H1 (cell line): ENCODE measurements at regions of chr2 and their contacts with region 1.

Region 1: DNA sequence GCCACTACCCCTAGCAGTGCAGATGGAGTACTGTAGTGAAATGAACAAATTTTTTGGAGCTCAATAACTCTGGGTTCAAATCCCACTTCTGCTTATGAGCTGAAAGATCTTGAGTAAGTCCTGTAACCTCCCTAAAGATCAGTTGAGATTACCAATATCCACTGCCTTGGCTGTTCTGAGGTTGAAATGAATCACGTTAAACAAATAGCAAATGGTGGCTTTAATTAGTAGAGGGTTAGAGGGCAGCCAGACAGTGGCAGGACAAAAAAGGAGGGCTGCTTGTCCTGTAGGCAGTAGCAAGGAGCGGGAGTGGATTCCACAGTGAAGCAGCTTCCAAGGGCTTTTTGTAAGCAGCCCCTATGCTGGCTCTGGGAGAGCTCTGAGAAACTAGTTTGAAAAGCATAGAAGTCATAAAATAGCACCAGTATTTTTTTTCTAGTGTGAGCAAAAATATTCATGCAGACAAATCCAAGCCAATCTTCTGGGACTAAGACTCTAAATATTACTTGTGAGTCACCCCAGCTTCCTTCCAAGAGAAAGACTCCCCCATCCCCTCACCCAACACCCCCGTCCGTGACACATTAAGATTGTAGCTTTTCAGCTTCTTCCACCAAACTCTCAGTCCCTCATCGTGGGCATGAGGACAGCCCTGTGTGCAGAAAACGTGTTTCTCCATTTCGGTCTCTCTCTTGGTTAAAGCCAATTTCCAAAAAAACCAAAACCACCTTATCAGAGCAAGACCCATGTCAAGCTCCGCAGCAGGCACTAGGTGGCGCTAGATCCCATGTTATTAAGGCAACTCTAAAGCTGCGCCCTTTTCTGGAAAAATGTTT is 123.5 kb upstream of the LGALSL start:
- DNase-seq: peak; percentile 54 to 87
- H3K4me3 ChIP-seq: no peak overlapping the region
- H3K27ac ChIP-seq: no peak overlapping the region
- H3K4me1 ChIP-seq: peaks cover 3 to 21% (median 11%) of the 10 kb centered on the region in 4 experiments; a peak in 6 of 7 replicates
- H3K27me3 ChIP-seq: no peaks in the 10 kb centered on the region
- CTCF ChIP-seq: peak; percentile 63 to 92 (median 86)
- EP300 ChIP-seq: no peak
- POLR2A ChIP-seq: no peak
- RAD21 ChIP-seq: peak; percentile 98

Region 2: DNA sequence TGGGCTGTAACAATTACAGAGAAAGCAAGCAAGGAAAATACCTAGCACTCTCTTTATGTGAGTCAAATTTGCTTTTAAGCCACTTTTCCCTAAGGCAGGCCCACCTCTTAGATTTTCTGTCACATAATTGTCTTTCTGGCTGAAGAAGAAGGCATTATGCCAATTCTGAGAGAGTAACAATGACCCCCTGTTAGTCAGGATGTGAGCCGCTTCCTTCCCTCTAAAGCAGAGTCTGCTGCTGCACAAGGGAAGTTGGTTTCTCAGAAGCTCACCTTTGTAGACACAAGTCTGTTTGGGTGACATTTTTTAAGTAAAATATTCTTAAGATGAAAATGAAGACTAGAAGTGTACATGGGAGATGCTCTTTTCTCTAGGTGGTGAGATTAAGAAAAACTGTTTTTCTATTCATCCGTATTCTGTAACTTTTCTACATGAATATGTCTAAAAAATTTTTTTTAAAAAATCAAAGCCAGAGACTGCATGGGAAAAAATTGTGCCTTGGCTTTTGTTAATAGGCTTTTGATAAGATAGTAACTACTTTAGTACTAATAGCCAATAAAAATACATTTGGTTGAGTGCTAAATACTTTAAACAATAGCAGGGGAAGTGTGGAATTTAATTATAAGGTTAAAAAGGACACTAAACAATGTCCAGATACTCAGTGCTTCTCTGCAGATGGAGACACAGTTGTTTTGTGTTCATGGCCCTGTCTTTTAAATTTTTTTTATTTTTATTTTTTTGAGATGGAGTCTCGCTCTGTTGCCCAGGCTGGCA is 277.8 kb before region 1 on chr2:
- CTCF ChIA-PET with region 1: interaction called, 37 read pairs
- POLR2A ChIA-PET with region 1: interaction called, 3 read pairs
- DNase-seq: no peak
- H3K4me3 ChIP-seq: no peak overlapping the region
- H3K27ac ChIP-seq: no peak overlapping the region
- H3K4me1 ChIP-seq: peaks cover 0 to 10% (median 4%) of the 10 kb centered on the region in 4 experiments; a peak in 5 of 7 replicates
- H3K27me3 ChIP-seq: no peaks in the 10 kb centered on the region
- CTCF ChIP-seq: no peak
- EP300 ChIP-seq: no peak
- POLR2A ChIP-seq: no peak
- RAD21 ChIP-seq: no peak

Region 3: GRCh38 chr2:64267699-64268098 is 62.8 kb before region 1 on chr2:
- CTCF ChIA-PET with region 1: interaction called, 13 read pairs
- POLR2A ChIA-PET with region 1: interaction called, 5 read pairs
- DNase-seq: peak in 1 of 2 experiments; percentile 66
- H3K4me3 ChIP-seq: no peak overlapping the region; a peak in 1 of 8 replicates
- H3K27ac ChIP-seq: peak overlapping the region; percentile 6; the same call in 1 of the 2 replicates
- H3K4me1 ChIP-seq: peaks cover 0 to 38% (median 25%) of the 10 kb centered on the region in 4 experiments
- H3K27me3 ChIP-seq: no peaks in the 10 kb centered on the region
- CTCF ChIP-seq: no peak
- EP300 ChIP-seq: peak in 1 of 2 experiments; percentile 79; a peak in 2 of 3 replicates
- POLR2A ChIP-seq: peak in 1 of 2 experiments; percentile 64; a peak in 1 of 3 replicates
- RAD21 ChIP-seq: peak in 1 of 2 experiments; percentile 11; a peak in 1 of 4 replicates

Region 4: GRCh38 chr2:64344976-64345576 is 14.6 kb after region 1 on chr2:
- CTCF ChIA-PET with region 1: interaction called, 32 read pairs
- POLR2A ChIA-PET with region 1: interaction called, 3 read pairs
- DNase-seq: no peak
- H3K4me3 ChIP-seq: no peak overlapping the region
- H3K27ac ChIP-seq: no peak overlapping the region
- H3K4me1 ChIP-seq: no peaks in the 10 kb centered on the region
- H3K27me3 ChIP-seq: no peaks in the 10 kb centered on the region
- CTCF ChIP-seq: no peak
- EP300 ChIP-seq: no peak
- POLR2A ChIP-seq: no peak
- RAD21 ChIP-seq: no peak

Region 5: GRCh38 chr2:64467096-64467843 is 136.8 kb after region 1 on chr2:
- CTCF ChIA-PET with region 1: interaction called, 17 read pairs
- POLR2A ChIA-PET with region 1: interaction called, 4 read pairs
- DNase-seq: no peak
- H3K4me3 ChIP-seq: no peak overlapping the region
- H3K27ac ChIP-seq: no peak overlapping the region
- H3K4me1 ChIP-seq: peaks cover 0 to 5% (median 1%) of the 10 kb centered on the region in 4 experiments; a peak in 2 of 7 replicates
- H3K27me3 ChIP-seq: no peaks in the 10 kb centered on the region
- CTCF ChIP-seq: no peak
- EP300 ChIP-seq: no peak
- POLR2A ChIP-seq: no peak
- RAD21 ChIP-seq: no peak

Region 6: GRCh38 chr2:64498438-64498837 is 167.9 kb after region 1 on chr2:
- CTCF ChIA-PET with region 1: interaction called, 11 read pairs
- POLR2A ChIA-PET with region 1: no interaction called
- DNase-seq: no peak
- H3K4me3 ChIP-seq: no peak overlapping the region
- H3K27ac ChIP-seq: no peak overlapping the region
- H3K4me1 ChIP-seq: peaks cover 0 to 10% (median 0%) of the 10 kb centered on the region in 4 experiments; a peak in 2 of 7 replicates
- H3K27me3 ChIP-seq: no peaks in the 10 kb centered on the region
- CTCF ChIP-seq: no peak
- EP300 ChIP-seq: no peak
- POLR2A ChIP-seq: no peak
- RAD21 ChIP-seq: no peak

Region 7: GRCh38 chr2:64586883-64587481 is 256.5 kb after region 1 on chr2:
- CTCF ChIA-PET with region 1: interaction called, 13 read pairs
- POLR2A ChIA-PET with region 1: no interaction called
- DNase-seq: no peak
- H3K4me3 ChIP-seq: no peak overlapping the region
- H3K27ac ChIP-seq: no peak overlapping the region
- H3K4me1 ChIP-seq: peaks cover 0 to 3% (median 0%) of the 10 kb centered on the region in 4 experiments; a peak in 1 of 7 replicates
- H3K27me3 ChIP-seq: no peaks in the 10 kb centered on the region
- CTCF ChIP-seq: peak in 2 of 3 experiments; percentile 51 to 65; a peak in 2 of 4 replicates
- EP300 ChIP-seq: no peak
- POLR2A ChIP-seq: no peak
- RAD21 ChIP-seq: peak; percentile 74 to 80